Activated CD4-positive, alpha-beta memory T cell treated with anti-CD3 and anti-CD28 coated beads for 36 hours (primary cell): ENCODE measurements at regions of chr19 and their contacts with region 1.

Region 1: GRCh38 chr19:11155373-11156120 is at the start of gene SPC24:
- DNase-seq: peak; percentile 96
- H3K4me3 Mint-ChIP-seq: peak within 1 kb of the TSS; percentile 81
- H3K27ac Mint-ChIP-seq: peak within 1 kb of the TSS; percentile 79
- H3K4me1 Mint-ChIP-seq: peaks cover 11% of the 10 kb centered on the region
- H3K27me3 Mint-ChIP-seq: no peaks in the 10 kb centered on the region
- total RNA-seq, gene SPC24: 64.1 to 70.3 TPM

Region 2: GRCh38 chr19:11073568-11073967 is 82.0 kb before region 1 on chr19:
- CTCF ChIA-PET with region 1: no interaction called
- POLR2A ChIA-PET with region 1: no interaction called
- intact Hi-C with region 1: no loop called
- DNase-seq: no peak
- H3K4me3 Mint-ChIP-seq: no peak overlapping the region
- H3K27ac Mint-ChIP-seq: no peak overlapping the region
- H3K4me1 Mint-ChIP-seq: peaks cover 7% of the 10 kb centered on the region
- H3K27me3 Mint-ChIP-seq: no peaks in the 10 kb centered on the region

Region 3: GRCh38 chr19:11090054-11090900 is 65.3 kb before region 1 on chr19:
- CTCF ChIA-PET with region 1: no interaction called
- POLR2A ChIA-PET with region 1: interaction called, 3 read pairs
- intact Hi-C with region 1: loop called (anchors 5 kb)
- DNase-seq: peak; percentile 99
- H3K4me3 Mint-ChIP-seq: peak overlapping the region; percentile 95
- H3K27ac Mint-ChIP-seq: peak overlapping the region; percentile 98
- H3K4me1 Mint-ChIP-seq: peaks cover 45% of the 10 kb centered on the region
- H3K27me3 Mint-ChIP-seq: no peaks in the 10 kb centered on the region

Region 4: GRCh38 chr19:11137542-11138384 is 17.8 kb before region 1 on chr19:
- CTCF ChIA-PET with region 1: interaction called, 5 read pairs
- POLR2A ChIA-PET with region 1: no interaction called
- intact Hi-C with region 1: loop called (anchors 1 kb)
- DNase-seq: peak; percentile 71
- H3K4me3 Mint-ChIP-seq: peak overlapping the region; percentile 71
- H3K27ac Mint-ChIP-seq: peak overlapping the region; percentile 49
- H3K4me1 Mint-ChIP-seq: peaks cover 9% of the 10 kb centered on the region
- H3K27me3 Mint-ChIP-seq: no peaks in the 10 kb centered on the region

Region 5: GRCh38 chr19:11197264-11198174 is 42.0 kb after region 1 on chr19 and contains the start of gene KANK2:
- CTCF ChIA-PET with region 1: no interaction called
- POLR2A ChIA-PET with region 1: no interaction called
- intact Hi-C with region 1: loop called (anchors 5 kb)
- DNase-seq: peak; percentile 82
- H3K4me3 Mint-ChIP-seq: peak within 1 kb of the TSS; percentile 66
- H3K27ac Mint-ChIP-seq: no peak within 1 kb of the TSS
- H3K4me1 Mint-ChIP-seq: peaks cover 8% of the 10 kb centered on the region
- H3K27me3 Mint-ChIP-seq: peaks cover 15% of the 10 kb centered on the region
- total RNA-seq, gene KANK2: 2.0 to 2.5 TPM